HepG2 (cell line): ENCODE measurements at regions of chr5 and their contacts with region 1.

Region 1: DNA sequence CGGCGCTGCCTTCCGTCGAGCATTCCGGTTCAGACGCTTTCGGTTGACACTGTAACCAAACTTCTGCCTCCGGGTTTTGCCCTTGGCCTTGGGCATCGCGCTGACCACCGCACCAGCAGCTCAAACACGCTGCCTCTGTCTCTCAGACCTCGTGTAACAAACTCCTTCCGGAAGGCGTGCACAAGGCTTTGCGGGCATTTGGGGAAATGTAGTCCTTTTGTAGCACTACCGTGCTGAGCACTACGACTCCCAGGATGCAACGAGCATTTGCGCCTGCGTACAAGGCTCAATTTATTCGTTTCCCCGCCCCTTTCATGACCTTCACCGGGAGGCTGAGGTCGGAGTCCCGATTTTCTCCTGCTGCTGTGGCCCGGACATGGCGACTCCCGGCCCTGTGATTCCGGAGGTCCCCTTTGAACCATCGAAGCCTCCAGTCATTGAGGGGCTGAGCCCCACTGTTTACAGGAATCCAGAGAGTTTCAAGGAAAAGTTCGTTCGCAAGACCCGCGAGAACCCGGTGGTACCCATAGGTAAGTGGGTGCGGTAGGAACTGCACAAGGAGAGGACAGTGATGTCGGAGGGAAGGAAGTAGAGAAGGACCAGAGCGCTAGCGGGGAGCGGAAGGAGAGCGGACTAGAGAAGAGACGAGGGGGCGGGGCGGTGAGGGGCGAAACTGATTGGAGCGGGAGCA is at the starts of genes HIGD2A and NOP16:
- DNase-seq: peak; percentile 98
- ATAC-seq: peak; percentile 90
- H3K4me3 ChIP-seq: peak within 1 kb of the TSS; percentile 71 to 93 (median 92)
- H3K27ac ChIP-seq: peak within 1 kb of the TSS; percentile 99
- H3K4me1 ChIP-seq: peaks cover 31% of the 10 kb centered on the region
- H3K27me3 ChIP-seq: no peaks in the 10 kb centered on the region; a peak in 1 of 5 replicates
- CTCF ChIP-seq: no peak
- EP300 ChIP-seq: no peak
- POLR2A ChIP-seq: peak; percentile 78 to 91
- RAD21 ChIP-seq: no peak
- total RNA-seq, gene HIGD2A: 89.2 and 95.7 TPM in 2 replicates
- total RNA-seq, gene NOP16: 48.4 and 58.4 TPM in 2 replicates

Region 2: GRCh38 chr5:176373100-176373818 is 15.3 kb before region 1 on chr5:
- CTCF ChIA-PET with region 1: no interaction called
- POLR2A ChIA-PET with region 1: interaction called, 9 read pairs
- in situ Hi-C with region 1: no loop called
- intact Hi-C with region 1: loop called (anchors 1 kb)
- DNase-seq: no peak
- ATAC-seq: no peak
- H3K4me3 ChIP-seq: no peak overlapping the region
- H3K27ac ChIP-seq: no peak overlapping the region
- H3K4me1 ChIP-seq: peaks cover 37% of the 10 kb centered on the region
- H3K27me3 ChIP-seq: no peaks in the 10 kb centered on the region
- CTCF ChIP-seq: no peak
- EP300 ChIP-seq: no peak
- POLR2A ChIP-seq: no peak
- RAD21 ChIP-seq: no peak

Region 3: DNA sequence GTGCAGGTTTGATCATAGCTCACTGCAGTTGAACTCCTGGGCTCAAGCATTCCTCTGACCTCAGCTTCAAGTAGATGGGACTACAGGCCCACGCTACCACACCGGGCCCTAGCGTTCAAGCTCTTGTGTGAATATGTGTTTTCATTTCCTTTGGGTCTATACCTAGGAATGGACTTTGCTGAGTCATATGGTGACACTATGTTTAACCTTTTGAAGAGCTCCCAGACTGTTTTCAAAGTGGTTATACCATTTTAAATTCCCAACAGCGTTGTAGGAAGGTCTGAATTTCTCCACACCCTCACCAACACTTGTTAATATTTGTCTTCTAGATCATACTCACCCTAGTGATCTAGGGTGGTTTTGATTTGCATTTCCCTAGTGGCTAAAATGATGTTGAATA is 93.1 kb after region 1 on chr5:
- CTCF ChIA-PET with region 1: no interaction called
- POLR2A ChIA-PET with region 1: no interaction called
- in situ Hi-C with region 1: no loop called
- intact Hi-C with region 1: no loop called
- DNase-seq: peak; percentile 71
- ATAC-seq: peak; percentile 90
- H3K4me3 ChIP-seq: no peak overlapping the region
- H3K27ac ChIP-seq: peak overlapping the region; percentile 25
- H3K4me1 ChIP-seq: peaks cover 10% of the 10 kb centered on the region; the same call in 1 of the 2 replicates
- H3K27me3 ChIP-seq: no peaks in the 10 kb centered on the region
- CTCF ChIP-seq: no peak
- EP300 ChIP-seq: no peak
- POLR2A ChIP-seq: no peak
- RAD21 ChIP-seq: no peak